Activated CD4-positive, alpha-beta T cell treated with anti-CD3 and anti-CD28 coated beads for 36 hours (primary cell): ENCODE measurements at regions of chr5 and their contacts with region 1.

Region 1: GRCh38 chr5:134289509-134290113 is 63.7 kb upstream of the PPP2CA start:
- DNase-seq: peak; percentile 57
- ATAC-seq: peak; percentile 70
- H3K4me3 Mint-ChIP-seq: no peak overlapping the region
- H3K27ac Mint-ChIP-seq: no peak overlapping the region
- H3K4me1 Mint-ChIP-seq: peaks cover 4% of the 10 kb centered on the region
- H3K27me3 Mint-ChIP-seq: no peaks in the 10 kb centered on the region

Region 2: GRCh38 chr5:134026521-134027268 is 262.9 kb before region 1 on chr5:
- CTCF ChIA-PET with region 1: interaction called, 3 read pairs
- POLR2A ChIA-PET with region 1: no interaction called
- intact Hi-C with region 1: loop called in 1 of 2 experiments (anchors 2 kb)
- DNase-seq: peak; percentile 75
- ATAC-seq: peak; percentile 99
- H3K4me3 Mint-ChIP-seq: no peak overlapping the region
- H3K27ac Mint-ChIP-seq: no peak overlapping the region
- H3K4me1 Mint-ChIP-seq: no peaks in the 10 kb centered on the region
- H3K27me3 Mint-ChIP-seq: no peaks in the 10 kb centered on the region

Region 3: DNA sequence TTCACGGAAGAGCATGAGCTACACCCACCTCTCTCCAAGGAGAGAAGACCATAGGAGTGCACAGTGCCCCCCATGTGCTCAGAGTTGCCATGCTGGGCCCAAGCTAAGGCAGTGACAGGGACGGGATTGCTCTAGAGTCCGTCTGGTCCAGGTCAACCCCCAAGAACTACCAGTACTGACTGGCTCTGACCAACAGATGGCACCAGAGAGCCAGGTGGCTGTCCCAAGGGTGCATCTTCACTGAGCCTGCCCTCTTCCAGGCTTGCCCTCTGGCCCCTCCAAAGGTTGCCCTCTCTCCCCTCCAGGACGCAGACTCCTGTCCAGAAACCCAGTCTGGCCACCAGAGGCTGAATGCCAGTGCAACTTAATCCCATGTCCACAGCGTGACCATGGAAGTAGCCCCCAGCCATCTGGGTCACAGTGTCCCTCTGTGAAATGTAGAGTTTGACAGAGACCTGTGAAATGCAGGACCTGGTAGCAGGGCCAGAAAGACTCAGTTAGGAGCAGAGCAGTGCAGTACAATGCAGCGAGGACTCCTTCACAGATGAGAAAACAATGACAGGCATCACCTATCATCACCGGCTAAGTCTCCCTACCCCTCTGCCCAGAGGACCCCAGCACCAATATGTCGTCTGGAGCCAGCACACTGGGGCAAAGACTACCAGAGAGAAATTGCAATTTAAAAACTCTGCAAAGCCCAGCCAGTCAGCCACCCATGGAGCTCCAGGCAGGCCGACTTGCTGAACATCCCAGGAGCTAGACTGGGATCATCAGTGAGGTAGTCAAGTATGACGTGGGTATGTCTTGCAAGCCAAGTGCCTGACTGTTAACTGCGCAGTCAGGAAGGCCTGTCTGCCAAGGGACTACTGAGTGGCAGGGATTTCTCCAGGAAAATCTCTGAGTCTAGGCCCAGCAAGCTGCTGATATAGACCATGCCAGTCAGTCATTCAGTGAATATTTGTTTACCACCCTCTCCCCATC is 105.2 kb before region 1 on chr5:
- CTCF ChIA-PET with region 1: interaction called, 18 read pairs
- POLR2A ChIA-PET with region 1: no interaction called
- intact Hi-C with region 1: loop called (anchors 1 kb)
- DNase-seq: peak; percentile 88
- ATAC-seq: peak; percentile 99
- H3K4me3 Mint-ChIP-seq: no peak overlapping the region
- H3K27ac Mint-ChIP-seq: no peak overlapping the region
- H3K4me1 Mint-ChIP-seq: no peaks in the 10 kb centered on the region
- H3K27me3 Mint-ChIP-seq: no peaks in the 10 kb centered on the region

Region 4: GRCh38 chr5:134275822-134276221 is 13.8 kb before region 1 on chr5:
- CTCF ChIA-PET with region 1: interaction called, 11 read pairs
- POLR2A ChIA-PET with region 1: no interaction called
- intact Hi-C with region 1: no loop called
- DNase-seq: no peak
- ATAC-seq: no peak
- H3K4me3 Mint-ChIP-seq: no peak overlapping the region
- H3K27ac Mint-ChIP-seq: no peak overlapping the region
- H3K4me1 Mint-ChIP-seq: peaks cover 3% of the 10 kb centered on the region
- H3K27me3 Mint-ChIP-seq: peaks cover under 1% of the 10 kb centered on the region

Region 5: DNA sequence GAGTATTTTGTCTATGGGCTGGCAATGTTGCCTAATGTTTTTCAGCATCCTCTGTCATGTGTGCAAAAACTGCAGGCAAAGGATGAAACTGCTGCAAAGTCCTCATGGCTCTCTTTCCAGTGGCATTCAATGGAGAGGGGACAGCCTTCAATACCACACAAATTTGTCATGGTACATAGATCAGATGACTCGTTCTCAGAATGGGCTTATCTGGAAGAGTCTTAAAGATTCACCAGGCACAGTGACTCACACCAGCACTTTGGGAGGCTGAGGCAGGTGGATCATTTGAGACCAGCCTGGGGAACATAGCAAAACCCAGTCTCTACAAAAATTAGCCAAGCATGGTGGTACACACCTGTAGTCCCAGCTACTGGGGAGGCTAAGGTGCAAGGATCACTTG is 116.8 kb after region 1 on chr5:
- CTCF ChIA-PET with region 1: no interaction called
- POLR2A ChIA-PET with region 1: no interaction called
- intact Hi-C with region 1: no loop called
- DNase-seq: peak; percentile 27
- ATAC-seq: peak; percentile 69
- H3K4me3 Mint-ChIP-seq: no peak overlapping the region
- H3K27ac Mint-ChIP-seq: peak overlapping the region; percentile 31
- H3K4me1 Mint-ChIP-seq: peaks cover 35% of the 10 kb centered on the region
- H3K27me3 Mint-ChIP-seq: no peaks in the 10 kb centered on the region